Activated naive CD4-positive, alpha-beta T cell treated with anti-CD3 and anti-CD28 coated beads for 36 hours (primary cell): ENCODE measurements at regions of chr7 and their contacts with region 1.

Region 1: GRCh38 chr7:18345641-18346234 is 149.8 kb upstream of the HDAC9 start:
- DNase-seq: peak; percentile 44
- H3K4me3 Mint-ChIP-seq: no peak overlapping the region
- H3K27ac Mint-ChIP-seq: no peak overlapping the region
- H3K4me1 Mint-ChIP-seq: no peaks in the 10 kb centered on the region
- H3K27me3 Mint-ChIP-seq: peaks cover 11% of the 10 kb centered on the region

Region 2: GRCh38 chr7:17680943-17681351 is 664.8 kb before region 1 on chr7:
- CTCF ChIA-PET with region 1: interaction called, 9 read pairs
- intact Hi-C with region 1: loop called (anchors 2 kb)
- DNase-seq: no peak
- H3K4me3 Mint-ChIP-seq: no peak overlapping the region
- H3K27ac Mint-ChIP-seq: peak overlapping the region; percentile 9
- H3K4me1 Mint-ChIP-seq: no peaks in the 10 kb centered on the region
- H3K27me3 Mint-ChIP-seq: no peaks in the 10 kb centered on the region

Region 3: GRCh38 chr7:17706734-17707133 is 639.0 kb before region 1 on chr7:
- CTCF ChIA-PET with region 1: interaction called, 3 read pairs
- intact Hi-C with region 1: loop called (anchors 1 kb)
- DNase-seq: peak; percentile 61
- H3K4me3 Mint-ChIP-seq: no peak overlapping the region
- H3K27ac Mint-ChIP-seq: no peak overlapping the region
- H3K4me1 Mint-ChIP-seq: no peaks in the 10 kb centered on the region
- H3K27me3 Mint-ChIP-seq: no peaks in the 10 kb centered on the region

Region 4: GRCh38 chr7:17971411-17971810 is 374.3 kb before region 1 on chr7:
- CTCF ChIA-PET with region 1: no interaction called
- intact Hi-C with region 1: loop called (anchors 5 kb)
- DNase-seq: no peak
- H3K4me3 Mint-ChIP-seq: no peak overlapping the region
- H3K27ac Mint-ChIP-seq: no peak overlapping the region
- H3K4me1 Mint-ChIP-seq: no peaks in the 10 kb centered on the region
- H3K27me3 Mint-ChIP-seq: no peaks in the 10 kb centered on the region

Region 5: GRCh38 chr7:18064242-18064838 is 281.4 kb before region 1 on chr7:
- CTCF ChIA-PET with region 1: interaction called, 4 read pairs
- intact Hi-C with region 1: loop called (anchors 1 kb)
- DNase-seq: peak; percentile 27
- H3K4me3 Mint-ChIP-seq: no peak overlapping the region
- H3K27ac Mint-ChIP-seq: no peak overlapping the region
- H3K4me1 Mint-ChIP-seq: no peaks in the 10 kb centered on the region
- H3K27me3 Mint-ChIP-seq: no peaks in the 10 kb centered on the region

Region 6: GRCh38 chr7:18558503-18558902 is 212.8 kb after region 1 on chr7:
- CTCF ChIA-PET with region 1: no interaction called
- intact Hi-C with region 1: no loop called
- DNase-seq: no peak
- H3K4me3 Mint-ChIP-seq: no peak overlapping the region
- H3K27ac Mint-ChIP-seq: no peak overlapping the region
- H3K4me1 Mint-ChIP-seq: no peaks in the 10 kb centered on the region
- H3K27me3 Mint-ChIP-seq: no peaks in the 10 kb centered on the region